A549 (cell line): ENCODE measurements at regions of chr7 and their contacts with region 1.

Region 1: GRCh38 chr7:131513245-131514061 is 43.0 kb downstream of the PODXL start:
- DNase-seq: peak; percentile 84 to 88
- ATAC-seq: peak; percentile 95 to 98
- H3K4me3 ChIP-seq: no peak overlapping the region
- H3K27ac ChIP-seq: peak overlapping the region in 1 of 2 experiments; percentile 70; a peak in 3 of 6 replicates
- H3K4me1 ChIP-seq: peaks cover 7% of the 10 kb centered on the region; the same call in 2 of the 3 replicates
- CTCF ChIP-seq: peak; percentile 92
- EP300 ChIP-seq: no peak
- POLR2A ChIP-seq: no peak
- RAD21 ChIP-seq: peak; percentile 83 to 89

Region 2: DNA sequence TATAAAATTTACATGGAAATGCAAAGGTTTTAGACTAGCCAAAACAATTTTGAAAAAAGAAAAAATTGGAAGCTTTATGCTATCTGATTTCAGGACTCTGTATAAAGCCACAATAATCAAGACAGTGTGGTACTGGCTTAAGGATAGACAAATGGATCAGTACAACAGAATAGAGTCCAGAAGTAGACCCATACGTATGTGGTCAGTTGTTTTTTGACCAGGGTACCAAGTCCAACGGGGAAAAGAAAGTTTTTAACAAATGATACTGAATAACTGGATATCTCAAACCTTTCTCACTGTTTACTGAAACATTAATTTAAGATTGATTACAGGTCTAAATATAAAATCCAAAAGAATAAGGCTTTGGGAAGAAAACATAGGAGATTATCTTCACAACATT is 36.7 kb before region 1 on chr7:
- CTCF ChIA-PET with region 1: no interaction called
- POLR2A ChIA-PET with region 1: no interaction called
- DNase-seq: no peak
- ATAC-seq: no peak
- H3K4me3 ChIP-seq: no peak overlapping the region
- H3K27ac ChIP-seq: no peak overlapping the region
- H3K4me1 ChIP-seq: peaks cover 36% of the 10 kb centered on the region
- CTCF ChIP-seq: no peak
- EP300 ChIP-seq: no peak
- POLR2A ChIP-seq: no peak
- RAD21 ChIP-seq: no peak

Region 3: GRCh38 chr7:131501422-131501821 is 12.0 kb before region 1 on chr7:
- CTCF ChIA-PET with region 1: interaction called, 58 read pairs
- POLR2A ChIA-PET with region 1: no interaction called
- DNase-seq: no peak
- ATAC-seq: no peak
- H3K4me3 ChIP-seq: no peak overlapping the region
- H3K27ac ChIP-seq: no peak overlapping the region
- H3K4me1 ChIP-seq: peaks cover 17% of the 10 kb centered on the region
- CTCF ChIP-seq: no peak
- EP300 ChIP-seq: no peak
- POLR2A ChIP-seq: no peak
- RAD21 ChIP-seq: no peak

Region 4: DNA sequence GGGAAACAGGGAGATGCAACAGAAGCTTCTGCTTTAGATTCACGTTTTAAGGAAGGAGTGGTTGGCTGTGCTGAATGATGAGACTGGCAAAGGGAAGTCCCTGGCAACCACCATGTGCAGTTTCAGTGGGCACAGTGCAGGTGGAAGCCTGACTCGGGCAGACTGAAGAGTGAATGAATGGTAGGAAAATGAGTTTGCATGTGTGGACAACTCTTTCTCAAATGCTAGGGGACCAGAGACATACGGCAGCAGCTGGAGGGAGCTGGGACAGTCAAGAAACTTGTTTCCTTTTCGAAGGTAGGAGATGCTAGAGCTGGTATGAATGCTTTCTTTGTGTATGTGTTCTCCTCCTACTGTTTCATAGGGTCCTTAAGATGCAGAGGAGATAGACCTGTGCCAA is 14.0 kb after region 1 on chr7:
- CTCF ChIA-PET with region 1: interaction called, 17 read pairs
- POLR2A ChIA-PET with region 1: no interaction called
- DNase-seq: no peak
- ATAC-seq: no peak
- H3K4me3 ChIP-seq: no peak overlapping the region
- H3K27ac ChIP-seq: no peak overlapping the region
- H3K4me1 ChIP-seq: peaks cover 11% of the 10 kb centered on the region; the same call in 2 of the 3 replicates
- CTCF ChIP-seq: no peak
- EP300 ChIP-seq: no peak
- POLR2A ChIP-seq: no peak
- RAD21 ChIP-seq: no peak

Region 5: GRCh38 chr7:131538071-131538790 is 24.8 kb after region 1 on chr7:
- CTCF ChIA-PET with region 1: interaction called, 17 read pairs
- POLR2A ChIA-PET with region 1: no interaction called
- DNase-seq: peak in 1 of 2 experiments; percentile 72
- ATAC-seq: peak; percentile 63 to 71; a peak in 4 of 6 replicates
- H3K4me3 ChIP-seq: no peak overlapping the region
- H3K27ac ChIP-seq: peak overlapping the region; percentile 65 to 86
- H3K4me1 ChIP-seq: peaks cover 37% of the 10 kb centered on the region
- CTCF ChIP-seq: no peak
- EP300 ChIP-seq: no peak
- POLR2A ChIP-seq: no peak
- RAD21 ChIP-seq: no peak

Region 6: GRCh38 chr7:131546583-131547111 is 33.2 kb after region 1 on chr7:
- CTCF ChIA-PET with region 1: interaction called, 14 read pairs
- POLR2A ChIA-PET with region 1: no interaction called
- DNase-seq: peak in 1 of 2 experiments; percentile 72
- ATAC-seq: peak in 1 of 2 experiments; percentile 63; a peak in 3 of 6 replicates
- H3K4me3 ChIP-seq: no peak overlapping the region
- H3K27ac ChIP-seq: no peak overlapping the region
- H3K4me1 ChIP-seq: peaks cover 17% of the 10 kb centered on the region
- CTCF ChIP-seq: peak; percentile 82
- EP300 ChIP-seq: no peak
- POLR2A ChIP-seq: no peak
- RAD21 ChIP-seq: peak; percentile 26 to 54; a peak in 3 of 5 replicates

Region 7: GRCh38 chr7:131555552-131556051 is 42.1 kb after region 1 on chr7:
- CTCF ChIA-PET with region 1: interaction called, 11 read pairs
- POLR2A ChIA-PET with region 1: no interaction called
- DNase-seq: no peak
- ATAC-seq: peak in 1 of 2 experiments; percentile 10; a peak in 3 of 6 replicates
- H3K4me3 ChIP-seq: peak overlapping the region; percentile 60
- H3K27ac ChIP-seq: peak overlapping the region; percentile 81 to 93
- H3K4me1 ChIP-seq: peaks cover 13% of the 10 kb centered on the region; the same call in 2 of the 3 replicates
- CTCF ChIP-seq: no peak
- EP300 ChIP-seq: no peak
- POLR2A ChIP-seq: no peak
- RAD21 ChIP-seq: no peak

Region 8: DNA sequence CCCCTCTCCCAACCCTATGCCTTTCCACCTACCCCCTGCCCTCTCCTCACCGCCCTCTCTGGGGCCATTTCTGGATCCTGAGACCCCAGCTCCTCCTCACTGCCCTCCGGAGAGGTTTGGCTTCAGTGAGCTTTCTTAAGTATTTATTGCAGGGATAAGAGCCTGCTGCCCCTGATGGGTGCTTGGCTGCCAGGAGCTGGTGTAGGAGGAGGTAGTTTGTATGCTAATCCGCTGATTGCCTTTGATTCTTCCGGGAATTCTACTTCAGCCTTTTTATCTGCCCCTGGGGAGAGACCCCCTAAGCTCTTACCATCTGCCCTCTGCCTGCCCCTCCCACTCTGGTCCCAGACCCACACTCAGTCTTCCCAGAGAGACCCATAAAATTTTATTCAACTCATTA is 306.4 kb after region 1 on chr7:
- CTCF ChIA-PET with region 1: no interaction called
- POLR2A ChIA-PET with region 1: no interaction called
- DNase-seq: no peak
- ATAC-seq: no peak
- H3K4me3 ChIP-seq: no peak overlapping the region
- H3K27ac ChIP-seq: no peak overlapping the region
- H3K4me1 ChIP-seq: no peaks in the 10 kb centered on the region
- CTCF ChIP-seq: no peak
- EP300 ChIP-seq: no peak
- POLR2A ChIP-seq: no peak
- RAD21 ChIP-seq: no peak